Gastrocnemius medialis (tissue), 4 donors: ENCODE measurements at regions of chr20 and their contacts with region 1.

Region 1: DNA sequence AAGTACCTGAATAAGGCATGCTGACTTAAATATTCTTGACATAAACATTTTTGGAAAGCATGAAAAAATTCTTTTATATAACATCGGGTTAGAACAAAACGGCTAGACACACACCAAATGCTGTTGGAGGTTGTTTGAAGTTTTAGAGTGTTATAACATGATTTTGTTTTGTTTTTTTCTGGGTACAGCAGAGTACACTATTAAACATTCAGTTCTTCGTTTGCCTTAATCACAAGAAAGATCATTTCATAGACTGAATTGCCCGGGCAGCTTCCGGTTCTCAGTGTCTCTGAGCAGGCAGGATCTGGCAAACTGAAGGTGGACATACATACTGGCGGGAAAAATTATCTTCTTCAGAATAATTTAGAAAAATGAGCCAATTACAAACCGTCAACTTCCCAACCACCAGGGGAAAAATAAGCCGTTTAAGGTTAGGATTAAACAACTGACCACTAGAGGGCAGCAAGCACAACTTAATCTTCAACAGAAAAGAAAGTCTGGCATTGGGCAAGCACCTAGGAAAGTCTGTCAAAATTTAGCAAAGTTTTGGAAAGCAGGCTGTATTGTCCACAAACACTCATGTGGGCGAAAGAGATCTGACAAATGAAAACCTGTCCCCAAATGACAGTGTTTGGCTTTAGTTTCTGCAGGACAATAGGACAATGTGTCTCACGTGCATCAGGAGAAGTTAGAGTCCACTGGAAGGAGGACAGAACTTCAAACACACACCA is 15.0 kb downstream of the ZNF217 start:
- DNase-seq: peak; percentile 30 to 53
- ATAC-seq: peak; percentile 84 to 88
- H3K4me3 ChIP-seq: peak overlapping the region; percentile 16 to 41 (median 30)
- H3K27ac ChIP-seq: peak overlapping the region; percentile 39 to 72 (median 60)
- H3K4me1 ChIP-seq: peaks cover 26 to 51% of the 10 kb centered on the region in 2 donors
- H3K27me3 ChIP-seq: no peaks in the 10 kb centered on the region
- CTCF ChIP-seq: peak; percentile 85 to 96 (median 91)
- POLR2A ChIP-seq: no peak

Region 2: GRCh38 chr20:53413186-53413631 is 165.4 kb before region 1 on chr20:
- in situ Hi-C with region 1: no loop called
- intact Hi-C with region 1: no loop called
- DNase-seq: no peak
- ATAC-seq: no peak
- H3K4me3 ChIP-seq: no peak overlapping the region
- H3K27ac ChIP-seq: no peak overlapping the region
- H3K4me1 ChIP-seq: peaks cover 0 to 10% of the 10 kb centered on the region in 2 donors
- H3K27me3 ChIP-seq: no peaks in the 10 kb centered on the region
- CTCF ChIP-seq: no peak
- POLR2A ChIP-seq: no peak

Region 3: DNA sequence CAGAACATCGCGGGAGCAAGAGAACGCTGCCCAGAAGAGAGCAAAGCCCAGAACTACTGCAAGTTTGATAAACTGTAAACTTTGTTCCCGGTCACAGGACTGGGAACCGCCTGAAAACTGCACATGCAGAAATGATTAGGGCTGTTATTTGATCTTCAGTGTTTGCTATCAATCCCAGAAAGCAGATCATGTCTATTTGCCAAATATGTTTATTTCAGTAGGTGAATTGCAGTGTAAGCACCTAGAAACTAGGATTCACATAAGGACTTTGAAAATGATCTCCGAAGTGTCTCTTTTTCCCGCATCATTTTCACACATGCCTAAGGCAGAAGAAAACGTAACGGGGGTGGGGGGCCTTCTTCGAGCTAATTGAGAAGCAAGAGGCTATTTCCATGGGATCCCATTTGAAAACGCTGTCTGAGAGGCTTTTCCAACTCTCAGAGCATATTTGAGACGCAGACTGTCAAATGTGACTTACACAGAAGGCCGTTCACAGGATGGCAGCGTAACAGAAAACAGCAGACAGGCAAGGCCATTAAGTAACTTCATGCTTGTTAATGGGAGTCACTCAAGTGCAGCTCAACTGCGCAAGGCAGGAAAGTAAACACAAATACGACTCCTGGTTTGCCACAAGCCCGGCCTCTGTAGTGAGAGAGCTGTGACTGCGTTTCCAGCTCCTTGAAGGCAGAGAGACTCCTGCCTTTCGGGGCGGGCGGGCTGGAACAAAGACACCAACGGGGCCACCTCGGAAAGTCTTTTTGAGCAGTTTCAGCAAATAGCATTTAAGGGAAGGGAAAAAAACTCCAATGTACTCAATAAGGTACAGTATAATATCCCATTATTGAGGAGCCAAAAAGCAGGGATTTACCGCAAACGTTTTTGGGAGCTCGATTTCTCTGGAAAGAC is 159.6 kb after region 1 on chr20:
- in situ Hi-C with region 1: no loop called
- intact Hi-C with region 1: loop called (anchors 5 kb)
- DNase-seq: peak; percentile 68 to 82
- ATAC-seq: peak; percentile 95 to 98
- H3K4me3 ChIP-seq: peak overlapping the region in 3 of 4 donors; percentile 16 to 28 (median 24)
- H3K27ac ChIP-seq: peak overlapping the region; percentile 10 to 71 (median 71)
- H3K4me1 ChIP-seq: peaks cover 4 to 28% of the 10 kb centered on the region in 2 donors
- H3K27me3 ChIP-seq: no peaks in the 10 kb centered on the region
- CTCF ChIP-seq: no peak
- POLR2A ChIP-seq: peak in 1 of 2 donors; percentile 54

Region 4: GRCh38 chr20:53915446-53916172 is 337.0 kb after region 1 on chr20:
- in situ Hi-C with region 1: loop called in 1 of 4 experiments (anchors 10 kb)
- intact Hi-C with region 1: loop called (anchors 1 kb)
- DNase-seq: peak; percentile 84 to 90
- ATAC-seq: peak; percentile 92 to 94
- H3K4me3 ChIP-seq: peak overlapping the region; percentile 67 to 73 (median 71)
- H3K27ac ChIP-seq: peak overlapping the region; percentile 63 to 88 (median 81)
- H3K4me1 ChIP-seq: peaks cover 4 to 28% of the 10 kb centered on the region in 2 donors
- H3K27me3 ChIP-seq: no peaks in the 10 kb centered on the region
- CTCF ChIP-seq: peak; percentile 80 to 95 (median 87)
- POLR2A ChIP-seq: no peak

Region 5: GRCh38 chr20:53939572-53940359 is 361.1 kb after region 1 on chr20:
- in situ Hi-C with region 1: loop called (anchors 5 to 10 kb)
- intact Hi-C with region 1: loop called (anchors 1 kb)
- DNase-seq: peak; percentile 73 to 89
- ATAC-seq: peak; percentile 93
- H3K4me3 ChIP-seq: peak overlapping the region in 3 of 4 donors; percentile 8 to 20 (median 11)
- H3K27ac ChIP-seq: peak overlapping the region; percentile 35 to 73 (median 66)
- H3K4me1 ChIP-seq: peaks cover 23 to 24% of the 10 kb centered on the region in 2 donors
- H3K27me3 ChIP-seq: no peaks in the 10 kb centered on the region
- CTCF ChIP-seq: peak; percentile 48 to 72 (median 70)
- POLR2A ChIP-seq: no peak

Region 6: DNA sequence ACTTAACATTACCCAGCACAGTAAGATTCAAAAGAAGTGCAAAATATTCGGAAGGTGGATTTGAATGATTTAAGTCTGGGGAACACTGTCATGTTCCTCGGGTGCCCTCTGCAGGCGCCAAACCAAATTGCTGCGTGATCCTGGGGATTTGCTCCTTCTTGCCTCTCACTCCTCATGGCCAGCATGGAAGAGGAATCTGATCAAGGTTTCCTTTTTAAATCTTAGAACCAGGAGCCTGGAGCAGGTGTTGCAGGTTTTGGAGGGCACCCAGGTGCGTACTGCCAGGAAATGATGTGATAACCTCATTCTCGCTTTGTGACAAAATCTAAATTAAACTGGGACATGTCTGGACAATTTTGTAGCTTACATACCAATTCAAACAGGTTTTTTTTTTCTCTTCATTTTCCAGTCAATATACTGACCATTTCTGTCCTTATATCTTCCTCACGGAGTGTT is 621.1 kb after region 1 on chr20:
- in situ Hi-C with region 1: loop called in 2 of 4 experiments (anchors 25 kb)
- intact Hi-C with region 1: loop called (anchors 2 kb)
- DNase-seq: peak; percentile 27 to 51
- ATAC-seq: peak; percentile 50 to 70
- H3K4me3 ChIP-seq: no peak overlapping the region
- H3K27ac ChIP-seq: no peak overlapping the region
- H3K4me1 ChIP-seq: no peaks in the 10 kb centered on the region
- H3K27me3 ChIP-seq: peaks cover 0 to 4% (median 0%) of the 10 kb centered on the region in 3 donors
- CTCF ChIP-seq: peak; percentile 49 to 85 (median 71)
- POLR2A ChIP-seq: no peak